Activated CD4-positive, alpha-beta T cell treated with anti-CD3 and anti-CD28 coated beads for 36 hours (primary cell): ENCODE measurements at regions of chr19 and their contacts with region 1.

Region 1: DNA sequence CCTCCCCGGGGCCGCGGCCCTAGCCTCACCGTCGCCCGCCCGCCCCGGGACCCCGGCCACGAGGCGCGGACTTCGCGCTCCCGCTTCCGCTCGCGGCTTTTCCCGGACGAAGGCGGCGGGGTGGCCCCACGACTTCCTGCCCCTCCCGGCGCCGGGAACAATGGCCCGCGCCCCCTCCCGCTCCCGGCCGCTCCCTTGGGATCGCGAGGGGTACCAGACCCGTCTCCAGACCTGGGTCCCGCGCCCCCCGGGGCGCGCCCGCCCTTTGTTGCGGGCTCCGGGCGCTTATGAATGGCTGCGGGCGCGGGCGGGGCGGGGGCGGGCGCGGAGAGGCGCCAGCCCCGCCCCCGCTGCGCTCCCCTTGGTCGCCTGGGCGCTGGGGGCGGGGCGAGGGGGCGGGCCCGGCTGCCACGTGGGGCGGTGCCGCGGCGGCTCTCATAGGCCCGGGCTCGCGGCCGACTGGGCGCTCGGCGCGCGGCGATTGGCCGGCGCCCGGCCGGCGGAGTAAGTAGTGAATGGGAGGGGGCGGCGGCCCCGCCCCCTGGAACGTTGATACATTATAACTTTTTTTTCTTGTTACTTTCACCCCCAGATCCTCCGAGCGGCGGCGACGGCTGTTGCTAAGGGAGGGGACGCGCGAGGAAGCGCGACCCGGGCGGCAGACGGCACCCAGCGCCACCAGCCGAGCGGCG is 1.1 kb downstream of the MIDN start:
- DNase-seq: peak; percentile 97
- ATAC-seq: peak; percentile 53
- H3K4me3 Mint-ChIP-seq: peak overlapping the region; percentile 73
- H3K27ac Mint-ChIP-seq: no peak overlapping the region
- H3K4me1 Mint-ChIP-seq: peaks cover 9% of the 10 kb centered on the region
- H3K27me3 Mint-ChIP-seq: no peaks in the 10 kb centered on the region

Region 2: GRCh38 chr19:1074544-1075283 is 174.7 kb before region 1 on chr19:
- CTCF ChIA-PET with region 1: interaction called, 6 read pairs
- POLR2A ChIA-PET with region 1: interaction called, 3 read pairs
- intact Hi-C with region 1: loop called in 1 of 2 experiments (anchors 2 kb)
- DNase-seq: peak; percentile 93
- ATAC-seq: peak; percentile 22
- H3K4me3 Mint-ChIP-seq: peak overlapping the region; percentile 52
- H3K27ac Mint-ChIP-seq: peak overlapping the region; percentile 84
- H3K4me1 Mint-ChIP-seq: peaks cover 63% of the 10 kb centered on the region
- H3K27me3 Mint-ChIP-seq: no peaks in the 10 kb centered on the region

Region 3: GRCh38 chr19:1260636-1261537 is 11.4 kb after region 1 on chr19:
- CTCF ChIA-PET with region 1: interaction called, 163 read pairs
- POLR2A ChIA-PET with region 1: interaction called, 36 read pairs
- intact Hi-C with region 1: loop called (anchors 1 kb)
- DNase-seq: peak; percentile 99
- ATAC-seq: peak; percentile 82
- H3K4me3 Mint-ChIP-seq: peak overlapping the region; percentile 95
- H3K27ac Mint-ChIP-seq: peak overlapping the region; percentile 87
- H3K4me1 Mint-ChIP-seq: peaks cover 54% of the 10 kb centered on the region
- H3K27me3 Mint-ChIP-seq: no peaks in the 10 kb centered on the region

Region 4: GRCh38 chr19:1269065-1269477 is 19.6 kb after region 1 on chr19 and contains the start of gene CIRBP:
- CTCF ChIA-PET with region 1: interaction called, 163 read pairs
- POLR2A ChIA-PET with region 1: interaction called, 59 read pairs
- intact Hi-C with region 1: loop called (anchors 1 kb)
- DNase-seq: peak; percentile 100
- ATAC-seq: peak; percentile 87
- H3K4me3 Mint-ChIP-seq: peak within 1 kb of the TSS; percentile 84
- H3K27ac Mint-ChIP-seq: peak within 1 kb of the TSS; percentile 87
- H3K4me1 Mint-ChIP-seq: peaks cover 66% of the 10 kb centered on the region
- H3K27me3 Mint-ChIP-seq: no peaks in the 10 kb centered on the region
- total RNA-seq, gene CIRBP: 123 to 188 TPM